Activated T-helper 2 cell treated with anti-CD3 and anti-CD28 coated beads, Interferon-gamma antibody, Interleukin-2, Interleukin-4, amounts not matched to agents 10 μg/mL and 5 μg/mL and 100 μg/mL, durations not matched to agents 14 hours and 24 hours and 36 hours (primary cell): ENCODE measurements at regions of chr22 and their contacts with region 1.

Region 1: DNA sequence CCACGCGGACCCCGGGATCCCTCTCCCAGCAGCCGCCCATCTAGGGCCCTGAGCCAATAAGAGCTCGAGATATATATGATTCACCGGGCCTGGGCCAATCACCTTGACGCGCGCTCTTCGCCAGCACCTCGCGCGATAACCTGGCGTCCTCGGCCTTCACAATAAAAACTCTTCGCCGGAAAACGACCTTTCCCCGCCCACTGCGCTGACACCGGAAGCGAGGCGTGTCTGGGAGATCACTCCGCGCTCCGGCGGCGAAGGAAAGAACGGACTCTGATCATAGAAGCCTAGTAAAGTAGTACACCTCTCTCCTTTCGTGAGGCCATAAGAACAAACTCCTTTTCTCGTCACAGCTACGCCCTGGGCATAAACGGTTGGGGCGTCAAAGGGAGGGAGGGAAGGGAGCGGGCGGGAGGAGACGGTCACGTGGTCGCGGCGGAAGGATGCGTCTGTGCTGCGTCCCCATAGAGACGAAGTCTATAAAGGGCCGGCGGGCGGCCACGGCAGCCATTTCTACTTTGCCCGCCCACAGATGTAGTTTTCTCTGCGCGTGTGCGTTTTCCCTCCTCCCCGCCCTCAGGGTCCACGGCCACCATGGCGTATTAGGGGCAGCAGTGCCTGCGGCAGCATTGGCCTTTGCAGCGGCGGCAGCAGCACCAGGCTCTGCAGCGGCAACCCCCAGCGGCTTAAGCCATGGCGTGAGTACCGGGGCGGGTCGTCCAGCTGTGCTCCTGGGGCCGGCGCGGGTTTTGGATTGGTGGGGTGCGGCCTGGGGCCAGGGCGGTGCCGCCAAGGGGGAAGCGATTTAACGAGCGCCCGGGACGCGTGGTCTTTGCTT is at the start of gene ATF4:
- DNase-seq: peak; percentile 97
- H3K4me3 Mint-ChIP-seq: peak within 1 kb of the TSS; percentile 96
- H3K27ac Mint-ChIP-seq: peak within 1 kb of the TSS; percentile 98
- H3K4me1 Mint-ChIP-seq: peaks cover 48% of the 10 kb centered on the region
- H3K27me3 Mint-ChIP-seq: no peaks in the 10 kb centered on the region
- total RNA-seq, gene ATF4: 339 and 348 TPM in 2 replicates

Region 2: DNA sequence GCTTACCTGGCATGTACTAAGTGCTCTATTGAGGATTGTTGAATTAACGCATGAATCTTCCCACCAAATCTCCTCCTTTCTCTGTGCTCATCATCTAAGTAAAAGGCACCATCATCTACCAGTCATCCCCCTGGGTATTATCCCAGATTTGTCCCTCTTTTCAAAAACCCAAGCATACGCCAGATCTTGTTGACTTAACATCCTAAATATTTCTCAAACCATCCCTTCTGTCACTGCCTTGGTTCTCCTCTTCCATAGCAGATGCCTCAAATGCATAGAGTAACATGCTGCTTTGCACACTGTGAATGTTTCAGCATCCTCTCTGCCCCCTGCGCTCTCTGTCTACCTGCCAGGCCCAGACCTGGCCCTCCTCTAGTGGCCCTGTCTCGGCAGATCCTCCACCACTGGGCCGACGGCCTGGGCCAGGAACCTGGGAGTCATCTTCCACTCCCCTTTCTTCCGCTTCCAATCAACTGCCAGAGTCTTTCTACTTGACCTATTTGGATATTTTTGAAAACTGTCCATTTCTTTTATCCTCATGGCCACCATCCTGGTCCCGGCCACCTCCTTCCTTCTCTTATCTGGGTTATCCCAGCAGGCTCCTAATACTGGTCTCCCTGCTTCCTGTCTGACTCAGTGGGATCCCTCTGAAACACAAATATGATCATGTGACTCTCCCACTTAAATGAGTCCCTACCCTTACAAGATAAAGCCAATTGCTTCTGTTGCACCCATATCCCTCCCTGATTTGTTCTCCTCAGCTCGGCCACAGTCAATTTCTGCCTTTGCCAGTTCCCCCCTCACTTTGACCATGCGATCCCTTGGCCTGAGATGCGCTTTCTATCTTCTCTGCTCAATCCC is 124.1 kb before region 1 on chr22:
- intact Hi-C with region 1: loop called (anchors 1 kb)
- DNase-seq: no peak
- H3K4me3 Mint-ChIP-seq: no peak overlapping the region
- H3K27ac Mint-ChIP-seq: no peak overlapping the region
- H3K4me1 Mint-ChIP-seq: peaks cover 3% of the 10 kb centered on the region
- H3K27me3 Mint-ChIP-seq: peaks cover 1% of the 10 kb centered on the region

Region 3: DNA sequence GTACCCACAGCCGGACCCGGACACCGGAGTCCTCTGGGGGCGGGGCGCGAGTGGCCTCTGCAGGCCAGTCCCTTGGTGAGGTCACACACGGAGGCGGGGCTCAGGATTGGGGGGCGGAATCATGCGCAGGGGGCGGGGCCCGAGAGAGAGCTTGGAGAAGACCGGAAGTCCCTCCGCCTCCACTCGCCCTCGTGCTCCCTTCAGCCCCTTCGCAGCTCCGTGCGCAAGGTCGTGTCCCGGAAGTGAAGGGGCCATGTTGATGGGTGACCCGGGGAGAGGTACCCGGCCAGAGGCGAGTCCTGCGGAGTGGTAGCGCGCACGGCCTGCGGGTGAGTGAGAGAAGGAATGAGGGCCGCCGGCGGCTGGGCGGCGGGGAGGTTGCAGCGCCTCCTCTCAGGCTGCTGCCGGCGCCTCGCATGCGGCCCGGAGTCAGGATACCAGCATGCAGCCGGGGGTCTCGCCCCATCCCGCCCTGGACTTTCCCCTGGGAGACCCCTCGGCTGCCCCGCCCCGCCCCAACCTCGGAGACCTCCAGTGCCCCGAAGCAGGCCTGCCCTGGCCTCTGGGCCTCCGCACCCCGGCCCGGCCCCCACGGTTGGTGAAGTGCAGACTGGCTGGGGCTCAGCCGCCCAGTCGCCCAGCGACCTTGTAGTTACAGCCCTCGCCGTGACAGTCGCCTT is 18.0 kb before region 1 on chr22 and contains the start of gene MIEF1:
- intact Hi-C with region 1: loop called (anchors 1 kb)
- DNase-seq: peak; percentile 88
- H3K4me3 Mint-ChIP-seq: peak within 1 kb of the TSS; percentile 99
- H3K27ac Mint-ChIP-seq: peak within 1 kb of the TSS; percentile 98
- H3K4me1 Mint-ChIP-seq: peaks cover 26% of the 10 kb centered on the region
- H3K27me3 Mint-ChIP-seq: no peaks in the 10 kb centered on the region
- total RNA-seq, gene MIEF1: 46.9 and 47.5 TPM in 2 replicates

Region 4: DNA sequence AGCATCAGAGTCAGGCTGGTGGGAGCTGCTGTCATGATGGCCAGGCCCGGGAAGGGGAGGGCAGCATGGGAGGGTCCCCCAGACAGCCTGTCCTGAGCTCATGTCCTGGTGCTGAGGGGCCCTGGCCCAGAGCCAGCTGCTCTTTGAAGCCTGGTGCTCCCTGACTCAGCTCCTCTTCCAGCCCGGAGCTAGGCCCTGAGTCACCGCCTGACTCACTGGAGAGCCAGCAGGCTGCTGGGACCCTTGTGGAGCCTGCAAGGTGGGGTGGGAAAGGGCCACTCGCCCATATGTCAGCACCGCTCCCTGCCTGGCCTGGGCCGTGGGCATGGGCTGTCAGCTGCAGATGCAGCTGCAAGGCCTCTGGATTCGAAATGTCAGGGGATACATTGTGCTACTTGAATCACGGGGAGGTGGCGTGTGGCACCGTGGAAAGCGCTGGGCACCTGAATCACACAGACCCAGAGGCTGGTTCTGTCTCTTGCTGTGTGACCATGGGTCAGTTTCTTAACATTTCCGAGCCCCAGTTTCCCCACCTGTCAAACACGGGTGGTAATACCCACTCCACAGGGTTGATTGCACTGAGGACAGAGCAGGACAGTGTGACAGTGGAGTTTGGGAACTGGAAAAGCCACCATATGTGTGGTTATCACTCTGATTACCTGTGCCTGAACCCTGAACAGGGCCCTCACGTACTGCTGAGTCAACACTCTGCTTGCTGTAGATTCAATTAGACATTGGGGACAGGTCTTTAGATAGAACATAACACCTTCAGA is 54.7 kb after region 1 on chr22:
- intact Hi-C with region 1: no loop called
- DNase-seq: no peak
- H3K4me3 Mint-ChIP-seq: no peak overlapping the region
- H3K27ac Mint-ChIP-seq: no peak overlapping the region
- H3K4me1 Mint-ChIP-seq: no peaks in the 10 kb centered on the region
- H3K27me3 Mint-ChIP-seq: peaks cover 25% of the 10 kb centered on the region